ENCODE measurements at regions of chrX and their contacts with region 1.

Region 1: GRCh38 chrX:9859711-9860555 is 73.7 kb downstream of the SHROOM2 start:
- DNase-seq: no peak
- H3K4me3 ChIP-seq: no peak overlapping the region
- H3K27ac ChIP-seq: no peak overlapping the region
- H3K4me1 ChIP-seq: peaks cover 0 to 7% (median 3%) of the 10 kb centered on the region in 4 experiments; a peak in 2 of 7 replicates
- H3K27me3 ChIP-seq: no peaks in the 10 kb centered on the region
- CTCF ChIP-seq: no peak
- EP300 ChIP-seq: no peak
- POLR2A ChIP-seq: no peak
- RAD21 ChIP-seq: no peak

Region 2: DNA sequence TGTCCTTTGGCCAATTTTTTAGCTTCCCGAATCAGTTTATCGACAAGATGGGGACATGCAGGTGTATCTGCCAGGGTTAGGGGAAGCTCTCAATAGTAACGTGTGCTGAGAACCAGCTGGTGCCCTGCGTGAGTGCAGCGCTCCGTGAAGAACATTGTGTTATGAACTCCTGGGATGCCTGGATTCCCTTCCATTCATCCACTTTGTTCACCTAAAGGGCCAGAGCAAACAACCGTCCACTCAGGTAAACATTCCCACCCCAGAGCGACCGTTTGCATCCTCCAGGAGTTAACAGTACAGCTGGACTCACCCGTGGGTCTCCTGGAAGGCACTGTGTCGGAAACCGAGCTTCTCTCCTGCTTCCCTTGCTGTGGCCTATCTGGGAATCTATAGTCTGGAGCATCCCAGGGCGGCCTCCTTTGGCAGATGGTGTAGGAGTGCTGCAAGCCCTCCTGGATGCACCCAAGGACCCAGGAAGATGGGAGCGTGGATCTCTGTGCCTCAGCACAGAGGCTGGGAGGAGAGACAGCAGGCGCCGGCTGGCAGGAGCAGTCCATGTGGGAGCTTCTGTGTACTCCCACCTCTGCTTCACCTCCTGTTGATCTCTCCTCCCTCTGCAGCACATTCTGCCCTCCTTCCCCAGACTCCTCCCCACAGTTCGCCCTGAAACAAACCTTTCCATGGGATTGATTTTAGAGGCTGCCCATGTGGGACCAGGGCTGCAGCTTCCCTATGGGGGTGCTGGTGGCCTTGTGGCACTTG is 11.0 kb before region 1 on chrX:
- CTCF ChIA-PET with region 1: interaction called, 10 read pairs
- POLR2A ChIA-PET with region 1: no interaction called
- DNase-seq: no peak
- H3K4me3 ChIP-seq: no peak overlapping the region
- H3K27ac ChIP-seq: no peak overlapping the region
- H3K4me1 ChIP-seq: peaks cover 0 to 6% (median 2%) of the 10 kb centered on the region in 4 experiments; a peak in 5 of 7 replicates
- H3K27me3 ChIP-seq: no peaks in the 10 kb centered on the region
- CTCF ChIP-seq: no peak
- EP300 ChIP-seq: no peak
- POLR2A ChIP-seq: no peak
- RAD21 ChIP-seq: no peak

Region 3: DNA sequence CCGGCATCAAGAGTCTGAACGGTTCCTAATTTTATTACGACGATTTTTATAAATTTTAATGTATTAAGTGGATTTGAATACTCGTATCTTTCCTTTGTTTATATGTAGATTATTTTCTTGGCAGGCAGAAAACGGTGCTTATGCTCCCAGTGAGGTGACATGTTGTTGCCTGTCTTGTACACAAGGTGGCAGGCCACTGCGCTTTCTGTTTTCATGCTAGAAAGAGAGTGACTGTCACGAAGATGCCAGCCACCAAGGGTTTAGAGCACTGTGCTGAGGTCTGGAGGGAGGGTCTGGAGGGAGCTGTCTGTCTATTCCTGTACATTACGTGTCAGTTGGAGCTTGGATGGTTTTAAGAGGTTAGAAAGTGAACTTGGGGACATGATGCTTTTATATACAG is 14.0 kb after region 1 on chrX:
- CTCF ChIA-PET with region 1: interaction called, 10 read pairs
- POLR2A ChIA-PET with region 1: no interaction called
- DNase-seq: peak in 1 of 2 experiments; percentile 50
- H3K4me3 ChIP-seq: no peak overlapping the region
- H3K27ac ChIP-seq: no peak overlapping the region
- H3K4me1 ChIP-seq: peaks cover 0 to 7% (median 0%) of the 10 kb centered on the region in 4 experiments; a peak in 2 of 7 replicates
- H3K27me3 ChIP-seq: no peaks in the 10 kb centered on the region
- CTCF ChIP-seq: peak; percentile 45 to 56 (median 56)
- EP300 ChIP-seq: no peak
- POLR2A ChIP-seq: no peak
- RAD21 ChIP-seq: peak; percentile 42 to 53

Region 4: GRCh38 chrX:10156199-10157031 is 296.5 kb after region 1 on chrX and contains the start of gene CLCN4:
- CTCF ChIA-PET with region 1: no interaction called
- POLR2A ChIA-PET with region 1: no interaction called
- DNase-seq: peak in 1 of 2 experiments; percentile 69
- H3K4me3 ChIP-seq: peak within 1 kb of the TSS in 2 of 4 experiments; percentile 9 to 55; a peak in 4 of 8 replicates
- H3K27ac ChIP-seq: no peak within 1 kb of the TSS; the same call in 1 of the 2 replicates
- H3K4me1 ChIP-seq: peaks cover 0 to 9% (median 5%) of the 10 kb centered on the region in 4 experiments; a peak in 5 of 7 replicates
- H3K27me3 ChIP-seq: no peaks in the 10 kb centered on the region; a peak in 1 of 7 replicates
- CTCF ChIP-seq: no peak
- EP300 ChIP-seq: no peak
- POLR2A ChIP-seq: no peak
- RAD21 ChIP-seq: no peak
- total RNA-seq, gene CLCN4: 7.5 and 11.2 TPM in 2 replicates